H1 (cell line): ENCODE measurements at regions of chr1 and their contacts with region 1.

Region 1: DNA sequence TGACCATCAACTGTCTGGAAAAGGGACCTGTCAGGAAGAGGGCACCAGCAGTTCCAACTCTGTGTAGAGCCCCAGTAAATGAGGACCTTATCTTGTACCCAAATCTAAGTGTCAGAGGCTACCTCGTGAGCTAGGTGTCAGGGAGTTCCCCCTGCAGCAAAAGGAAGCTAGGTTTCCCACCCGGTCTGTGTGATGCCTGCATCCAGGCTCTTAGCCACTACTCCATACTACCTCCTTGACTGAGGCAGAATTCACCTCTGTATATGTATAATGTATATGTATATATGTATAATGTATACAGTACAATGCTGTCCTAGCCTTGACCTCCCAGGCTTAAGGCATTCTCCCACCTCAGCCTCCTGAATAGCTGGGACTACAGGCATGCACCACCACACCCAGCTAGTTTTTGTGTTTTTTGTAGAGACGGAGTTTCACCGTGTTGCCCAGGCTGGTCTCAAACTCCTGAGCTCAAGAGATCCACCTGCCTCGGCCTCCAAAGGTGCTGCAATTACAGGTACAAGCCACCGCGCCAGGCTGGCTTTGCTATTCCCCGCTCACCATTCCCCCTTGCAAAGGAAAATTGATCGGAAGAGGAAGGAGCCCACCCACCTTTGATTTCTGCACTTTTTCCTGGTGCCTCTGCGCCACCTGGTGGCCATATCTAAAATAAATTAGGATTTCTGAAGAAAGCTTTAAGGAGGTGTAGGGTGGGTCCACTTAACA is 15.7 kb upstream of the LUZP1 start:
- DNase-seq: peak; percentile 57 to 69
- H3K4me3 ChIP-seq: no peak overlapping the region
- H3K27ac ChIP-seq: no peak overlapping the region
- H3K4me1 ChIP-seq: no peaks in the 10 kb centered on the region
- H3K27me3 ChIP-seq: peaks cover 0 to under 1% (median 0%) of the 10 kb centered on the region in 4 experiments; a peak in 1 of 7 replicates
- CTCF ChIP-seq: peak; percentile 36 to 86 (median 63)
- EP300 ChIP-seq: no peak
- POLR2A ChIP-seq: no peak
- RAD21 ChIP-seq: peak; percentile 93 to 94

Region 2: DNA sequence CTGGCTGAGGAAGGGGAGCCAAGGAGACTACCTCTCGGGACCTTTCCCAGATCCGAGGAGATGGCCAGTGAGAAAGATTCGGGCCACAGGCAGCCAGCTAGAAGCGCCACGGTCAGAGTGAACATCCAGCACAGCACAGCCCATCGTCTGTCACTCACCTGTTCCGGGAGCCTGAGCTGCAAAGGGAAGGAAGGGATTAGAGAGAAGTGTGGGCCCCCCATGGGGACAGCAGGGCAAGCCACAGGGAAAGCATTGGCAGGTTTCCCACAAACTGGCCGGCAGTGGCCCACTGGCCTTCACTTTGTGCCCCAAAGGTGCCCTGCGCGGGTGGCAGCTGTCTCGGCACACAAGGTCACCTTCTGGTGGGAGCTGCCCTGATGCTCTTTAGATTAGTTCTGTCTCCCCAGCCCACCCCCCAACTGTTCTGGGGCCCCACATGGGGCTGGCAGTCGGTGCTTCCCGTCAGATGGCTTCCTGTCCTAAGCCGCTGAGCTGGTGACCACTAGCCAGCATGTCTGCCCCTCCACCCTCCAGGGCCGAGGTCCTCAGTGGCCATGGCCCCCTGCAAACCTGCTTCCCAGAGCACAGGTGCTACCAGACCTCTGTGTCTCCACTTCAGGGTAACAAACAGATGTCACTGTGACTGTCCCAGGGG is 268.4 kb before region 1 on chr1:
- CTCF ChIA-PET with region 1: no interaction called
- POLR2A ChIA-PET with region 1: no interaction called
- DNase-seq: no peak
- H3K4me3 ChIP-seq: no peak overlapping the region
- H3K27ac ChIP-seq: no peak overlapping the region
- H3K4me1 ChIP-seq: peaks cover 0 to 3% (median 0%) of the 10 kb centered on the region in 4 experiments; a peak in 2 of 7 replicates
- H3K27me3 ChIP-seq: no peaks in the 10 kb centered on the region
- CTCF ChIP-seq: no peak
- EP300 ChIP-seq: no peak
- POLR2A ChIP-seq: no peak
- RAD21 ChIP-seq: no peak

Region 3: DNA sequence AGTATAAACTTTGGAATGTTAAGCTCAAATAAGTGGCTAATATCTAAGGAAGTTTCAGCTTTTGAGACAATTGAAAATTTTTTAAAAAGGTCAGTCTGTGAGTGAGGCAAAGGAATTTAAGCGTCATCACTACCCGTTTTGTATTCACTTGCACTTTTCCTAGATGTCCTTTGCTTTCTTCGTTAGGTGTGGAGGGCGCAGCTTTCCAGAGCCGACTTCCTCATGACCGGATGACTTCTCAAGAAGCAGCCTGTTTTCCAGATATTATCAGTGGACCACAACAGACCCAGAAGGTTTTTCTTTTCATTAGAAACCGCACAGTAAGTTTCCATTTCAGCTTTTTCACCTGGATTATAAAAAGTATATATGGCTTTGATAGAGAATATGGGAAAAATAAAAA is 134.2 kb before region 1 on chr1:
- CTCF ChIA-PET with region 1: interaction called, 11 read pairs
- POLR2A ChIA-PET with region 1: no interaction called
- DNase-seq: no peak
- H3K4me3 ChIP-seq: no peak overlapping the region
- H3K27ac ChIP-seq: no peak overlapping the region
- H3K4me1 ChIP-seq: no peaks in the 10 kb centered on the region; a peak in 2 of 7 replicates
- H3K27me3 ChIP-seq: no peaks in the 10 kb centered on the region
- CTCF ChIP-seq: no peak
- EP300 ChIP-seq: no peak
- POLR2A ChIP-seq: no peak
- RAD21 ChIP-seq: no peak

Region 4: GRCh38 chr1:23114424-23115079 is 69.8 kb before region 1 on chr1:
- CTCF ChIA-PET with region 1: interaction called, 24 read pairs
- POLR2A ChIA-PET with region 1: no interaction called
- DNase-seq: no peak
- H3K4me3 ChIP-seq: no peak overlapping the region
- H3K27ac ChIP-seq: no peak overlapping the region
- H3K4me1 ChIP-seq: peaks cover 0 to 5% (median under 1%) of the 10 kb centered on the region in 4 experiments; a peak in 3 of 7 replicates
- H3K27me3 ChIP-seq: no peaks in the 10 kb centered on the region
- CTCF ChIP-seq: no peak
- EP300 ChIP-seq: no peak
- POLR2A ChIP-seq: no peak
- RAD21 ChIP-seq: no peak

Region 5: GRCh38 chr1:23156945-23157344 is 27.4 kb before region 1 on chr1:
- CTCF ChIA-PET with region 1: interaction called, 12 read pairs
- POLR2A ChIA-PET with region 1: interaction called, 3 read pairs
- DNase-seq: no peak
- H3K4me3 ChIP-seq: no peak overlapping the region
- H3K27ac ChIP-seq: no peak overlapping the region
- H3K4me1 ChIP-seq: peaks cover 0 to 3% (median 1%) of the 10 kb centered on the region in 4 experiments; a peak in 1 of 7 replicates
- H3K27me3 ChIP-seq: no peaks in the 10 kb centered on the region
- CTCF ChIP-seq: no peak
- EP300 ChIP-seq: no peak
- POLR2A ChIP-seq: no peak
- RAD21 ChIP-seq: no peak

Region 6: GRCh38 chr1:23168457-23169194 is 15.7 kb before region 1 on chr1 and contains the start of gene LUZP1:
- CTCF ChIA-PET with region 1: interaction called, 44 read pairs
- POLR2A ChIA-PET with region 1: interaction called, 37 read pairs
- DNase-seq: peak; percentile 73 to 98
- H3K4me3 ChIP-seq: peak within 1 kb of the TSS; percentile 70 to 95 (median 83)
- H3K27ac ChIP-seq: peak within 1 kb of the TSS; percentile 80
- H3K4me1 ChIP-seq: peaks cover 0 to 8% (median 3%) of the 10 kb centered on the region in 4 experiments; a peak in 4 of 7 replicates
- H3K27me3 ChIP-seq: no peaks in the 10 kb centered on the region
- CTCF ChIP-seq: no peak
- EP300 ChIP-seq: no peak
- POLR2A ChIP-seq: peak; percentile 88 to 90
- RAD21 ChIP-seq: no peak
- total RNA-seq, gene LUZP1: 59.9 and 60.5 TPM in 2 replicates

Region 7: GRCh38 chr1:23210351-23210785 is 26.0 kb after region 1 on chr1:
- CTCF ChIA-PET with region 1: interaction called, 30 read pairs
- POLR2A ChIA-PET with region 1: interaction called, 3 read pairs
- DNase-seq: peak in 1 of 2 experiments; percentile 65
- H3K4me3 ChIP-seq: no peak overlapping the region
- H3K27ac ChIP-seq: no peak overlapping the region
- H3K4me1 ChIP-seq: peaks cover 0 to 2% (median 0%) of the 10 kb centered on the region in 4 experiments; a peak in 1 of 7 replicates
- H3K27me3 ChIP-seq: no peaks in the 10 kb centered on the region
- CTCF ChIP-seq: peak; percentile 57 to 73 (median 72)
- EP300 ChIP-seq: no peak
- POLR2A ChIP-seq: no peak
- RAD21 ChIP-seq: peak; percentile 44 to 69

Region 8: DNA sequence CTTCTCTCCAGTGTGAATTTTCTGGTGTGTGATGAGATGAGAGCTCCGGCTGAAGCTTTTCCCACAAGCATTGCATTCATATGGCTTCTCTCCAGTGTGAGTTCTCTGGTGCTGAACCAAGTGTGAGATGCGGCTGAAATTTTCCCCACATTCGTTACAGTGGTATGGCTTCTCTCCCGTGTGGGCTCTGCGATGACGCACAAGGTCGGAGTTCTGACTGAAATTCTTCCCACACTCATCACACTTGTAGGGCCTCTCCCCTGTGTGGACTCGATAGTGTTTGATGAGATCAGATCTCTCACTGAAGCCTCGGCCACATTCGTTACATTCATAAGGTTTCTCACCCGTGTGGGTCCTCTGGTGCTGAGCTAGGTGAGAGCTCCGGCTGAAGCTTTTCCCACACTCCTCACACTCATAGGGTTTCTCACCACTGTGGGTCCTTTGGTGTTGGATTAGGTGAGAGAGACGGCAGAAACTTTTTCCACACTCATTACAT is 177.9 kb after region 1 on chr1:
- CTCF ChIA-PET with region 1: no interaction called
- POLR2A ChIA-PET with region 1: no interaction called
- DNase-seq: no peak
- H3K4me3 ChIP-seq: no peak overlapping the region
- H3K27ac ChIP-seq: no peak overlapping the region
- H3K4me1 ChIP-seq: no peaks in the 10 kb centered on the region
- H3K27me3 ChIP-seq: peaks cover 54 to 88% (median 71%) of the 10 kb centered on the region in 4 experiments
- CTCF ChIP-seq: no peak
- EP300 ChIP-seq: no peak
- POLR2A ChIP-seq: no peak
- RAD21 ChIP-seq: no peak